Activated CD4-positive, alpha-beta memory T cell treated with anti-CD3 and anti-CD28 coated beads for 36 hours (primary cell): ENCODE measurements at regions of chr20 and their contacts with region 1.

Region 1: GRCh38 chr20:5950271-5951031 is at the starts of genes MCM8 and TRMT6:
- DNase-seq: peak; percentile 98
- H3K4me3 Mint-ChIP-seq: peak within 1 kb of the TSS; percentile 88
- H3K27ac Mint-ChIP-seq: peak within 1 kb of the TSS; percentile 95
- H3K4me1 Mint-ChIP-seq: peaks cover 58% of the 10 kb centered on the region
- H3K27me3 Mint-ChIP-seq: peaks cover 1% of the 10 kb centered on the region
- total RNA-seq, gene MCM8: 46.8 to 50.7 TPM
- total RNA-seq, gene TRMT6: 24.9 to 27.1 TPM

Region 2: GRCh38 chr20:5596401-5597193 is 353.9 kb before region 1 on chr20:
- CTCF ChIA-PET with region 1: no interaction called
- POLR2A ChIA-PET with region 1: no interaction called
- intact Hi-C with region 1: loop called (anchors 5 kb)
- DNase-seq: no peak
- H3K4me3 Mint-ChIP-seq: no peak overlapping the region
- H3K27ac Mint-ChIP-seq: peak overlapping the region; percentile 66
- H3K4me1 Mint-ChIP-seq: peaks cover 66% of the 10 kb centered on the region
- H3K27me3 Mint-ChIP-seq: no peaks in the 10 kb centered on the region

Region 3: GRCh38 chr20:5749952-5750779 is 200.3 kb before region 1 on chr20 and contains the start of gene SHLD1:
- CTCF ChIA-PET with region 1: interaction called, 3 read pairs
- POLR2A ChIA-PET with region 1: no interaction called
- intact Hi-C with region 1: loop called (anchors 2 kb)
- DNase-seq: peak; percentile 88
- H3K4me3 Mint-ChIP-seq: peak within 1 kb of the TSS; percentile 90
- H3K27ac Mint-ChIP-seq: peak within 1 kb of the TSS; percentile 95
- H3K4me1 Mint-ChIP-seq: peaks cover 18% of the 10 kb centered on the region
- H3K27me3 Mint-ChIP-seq: no peaks in the 10 kb centered on the region
- total RNA-seq, gene SHLD1: 9.0 to 9.8 TPM

Region 4: DNA sequence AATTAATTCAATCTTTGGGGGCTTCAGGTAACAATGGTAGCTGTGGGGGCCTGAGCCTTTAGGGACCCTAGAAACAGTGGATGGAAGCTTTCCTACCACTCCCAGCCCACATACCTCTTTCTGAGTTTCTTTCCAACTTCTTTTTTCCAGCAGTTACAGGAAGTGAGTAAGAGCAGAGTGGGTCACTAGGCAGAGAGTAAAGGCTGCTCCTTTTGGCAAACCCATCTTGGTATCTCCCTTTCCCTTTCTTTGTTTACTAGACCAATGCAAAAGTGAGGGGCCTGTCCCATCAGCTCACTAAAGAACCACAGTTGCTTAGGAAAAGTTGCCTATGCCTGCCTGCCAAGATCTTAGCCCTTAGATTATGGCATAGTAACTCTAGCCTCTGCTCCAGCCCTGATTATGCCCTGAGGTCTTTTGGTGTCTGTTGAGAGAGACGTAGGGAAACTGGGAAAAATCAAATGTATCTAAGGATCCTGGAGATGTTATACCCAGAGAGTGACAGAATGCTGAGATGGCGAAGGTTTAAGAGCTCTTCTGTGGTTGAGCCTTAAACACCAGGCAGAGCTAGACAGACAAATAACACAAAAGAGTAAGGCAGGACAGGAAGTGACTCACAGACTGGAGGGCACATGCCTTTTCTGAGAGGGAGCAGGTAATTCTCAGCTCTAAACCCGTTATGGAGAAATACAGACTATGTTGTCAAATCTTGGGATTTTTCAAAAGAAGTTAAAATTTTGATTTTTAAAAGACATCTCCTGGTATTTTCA is 31.4 kb before region 1 on chr20:
- CTCF ChIA-PET with region 1: interaction called, 4 read pairs
- POLR2A ChIA-PET with region 1: interaction called, 4 read pairs
- intact Hi-C with region 1: loop called (anchors 1 kb)
- DNase-seq: peak; percentile 30
- H3K4me3 Mint-ChIP-seq: no peak overlapping the region
- H3K27ac Mint-ChIP-seq: peak overlapping the region; percentile 19
- H3K4me1 Mint-ChIP-seq: peaks cover 20% of the 10 kb centered on the region
- H3K27me3 Mint-ChIP-seq: peaks cover 2% of the 10 kb centered on the region

Region 5: DNA sequence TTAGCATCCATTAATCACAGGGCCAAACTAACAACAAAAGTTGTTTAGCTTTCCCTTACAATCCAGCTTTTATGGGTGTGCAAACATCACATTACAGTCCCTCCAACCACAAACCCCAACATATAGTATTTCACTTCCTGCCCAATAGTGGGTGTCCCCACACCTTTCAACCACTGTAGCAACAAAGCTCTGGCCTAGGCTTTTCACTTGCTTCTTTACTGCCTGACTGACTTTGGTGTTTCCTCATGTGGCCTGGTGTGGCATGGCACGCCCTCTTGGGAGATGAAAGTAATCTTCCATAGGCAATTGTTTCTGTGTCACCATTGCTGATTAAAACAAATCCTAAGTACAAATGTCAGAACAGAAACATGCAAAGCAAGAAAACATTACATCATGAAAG is 46.3 kb after region 1 on chr20:
- CTCF ChIA-PET with region 1: no interaction called
- POLR2A ChIA-PET with region 1: interaction called, 4 read pairs
- intact Hi-C with region 1: loop called (anchors 2 kb)
- DNase-seq: peak; percentile 58
- H3K4me3 Mint-ChIP-seq: no peak overlapping the region
- H3K27ac Mint-ChIP-seq: peak overlapping the region; percentile 73
- H3K4me1 Mint-ChIP-seq: peaks cover 20% of the 10 kb centered on the region
- H3K27me3 Mint-ChIP-seq: no peaks in the 10 kb centered on the region